ENCODE measurements at regions of chr10 and their contacts with region 1.

Region 1: GRCh38 chr10:784403-785088 is 95.1 kb upstream of the DIP2C start:
- DNase-seq: no peak

Region 2: GRCh38 chr10:588241-589165 is 196.0 kb before region 1 on chr10:
- intact Hi-C with region 1: loop called (anchors 10 kb)
- DNase-seq: peak; percentile 80